Left colon (tissue), 2 donors: ENCODE measurements at regions of chr18 and their contacts with region 1.

Region 1: DNA sequence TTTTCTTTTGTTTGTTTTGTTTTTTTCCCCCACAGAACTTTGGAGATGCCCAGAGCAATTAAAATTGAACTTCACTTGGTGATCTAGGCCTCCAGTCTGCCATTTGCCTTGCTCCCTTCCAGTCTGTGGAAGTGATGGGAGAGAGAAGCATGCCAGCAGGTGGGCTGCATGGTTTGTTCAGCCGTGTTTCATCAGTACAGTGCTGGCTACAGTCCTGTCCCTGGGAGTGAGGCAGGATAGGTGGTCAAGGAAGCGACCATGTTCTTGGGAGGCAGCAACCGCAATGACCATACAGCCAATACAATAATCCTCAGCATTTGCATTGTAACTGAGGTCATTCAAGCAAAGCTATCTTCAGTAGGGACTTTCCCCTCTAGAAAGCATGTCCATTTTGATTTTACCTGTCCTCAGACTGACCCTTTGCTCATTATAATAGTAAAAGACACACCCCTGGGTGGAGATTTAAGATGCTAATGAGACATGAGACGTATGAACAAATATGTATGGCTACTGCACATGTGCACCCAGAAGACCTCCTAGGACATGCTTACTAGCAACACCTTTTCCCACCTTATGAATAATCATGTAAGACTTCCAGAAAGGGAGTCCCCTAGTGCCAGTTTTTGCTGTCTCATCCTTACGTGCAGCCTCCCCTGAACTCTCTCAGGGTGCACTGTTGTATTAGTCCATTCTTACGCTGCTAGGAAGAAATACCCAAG is 11.1 kb upstream of the LIPG start:
- DNase-seq: no peak
- ATAC-seq: no peak

Region 2: DNA sequence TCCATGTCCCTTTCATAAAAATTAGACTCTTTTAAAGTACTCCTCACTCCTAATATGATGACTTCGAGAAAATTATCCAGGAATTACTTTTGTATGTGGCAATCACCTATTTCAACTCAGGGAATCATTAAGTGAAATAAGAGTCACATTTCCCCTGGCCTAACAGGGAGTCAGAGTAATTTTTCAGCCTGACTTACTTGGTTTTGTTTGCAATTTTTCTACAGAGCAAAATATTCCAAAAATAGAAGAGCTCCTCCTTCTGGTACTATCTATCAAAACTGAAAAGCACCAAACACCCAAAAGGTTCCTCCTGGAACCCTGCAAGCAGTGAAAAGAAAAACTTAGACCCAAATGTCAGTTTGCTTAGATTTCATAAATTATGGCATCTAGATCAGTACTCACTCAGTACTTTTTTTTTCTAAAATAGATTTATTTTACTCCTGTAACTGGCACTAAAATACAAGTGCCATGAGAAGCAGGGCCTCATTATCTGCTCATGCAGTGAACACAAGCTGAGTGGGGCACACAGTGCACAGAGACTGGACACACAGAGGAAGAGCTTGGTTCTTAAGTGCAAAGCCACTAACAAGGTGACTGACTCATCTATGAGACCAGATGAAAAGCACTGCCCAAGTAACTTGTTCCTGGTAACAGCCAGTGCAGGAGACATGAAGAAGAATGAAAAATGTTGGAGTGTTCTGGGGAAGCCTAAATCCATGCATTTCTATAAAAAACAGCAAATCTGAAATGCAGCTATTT is 233.8 kb after region 1 on chr18:
- intact Hi-C with region 1: loop called in 1 of 2 experiments (anchors 10 kb)
- DNase-seq: no peak
- ATAC-seq: no peak